PC-9 (cell line): ENCODE measurements at regions of chr9 and their contacts with region 1.

Region 1: DNA sequence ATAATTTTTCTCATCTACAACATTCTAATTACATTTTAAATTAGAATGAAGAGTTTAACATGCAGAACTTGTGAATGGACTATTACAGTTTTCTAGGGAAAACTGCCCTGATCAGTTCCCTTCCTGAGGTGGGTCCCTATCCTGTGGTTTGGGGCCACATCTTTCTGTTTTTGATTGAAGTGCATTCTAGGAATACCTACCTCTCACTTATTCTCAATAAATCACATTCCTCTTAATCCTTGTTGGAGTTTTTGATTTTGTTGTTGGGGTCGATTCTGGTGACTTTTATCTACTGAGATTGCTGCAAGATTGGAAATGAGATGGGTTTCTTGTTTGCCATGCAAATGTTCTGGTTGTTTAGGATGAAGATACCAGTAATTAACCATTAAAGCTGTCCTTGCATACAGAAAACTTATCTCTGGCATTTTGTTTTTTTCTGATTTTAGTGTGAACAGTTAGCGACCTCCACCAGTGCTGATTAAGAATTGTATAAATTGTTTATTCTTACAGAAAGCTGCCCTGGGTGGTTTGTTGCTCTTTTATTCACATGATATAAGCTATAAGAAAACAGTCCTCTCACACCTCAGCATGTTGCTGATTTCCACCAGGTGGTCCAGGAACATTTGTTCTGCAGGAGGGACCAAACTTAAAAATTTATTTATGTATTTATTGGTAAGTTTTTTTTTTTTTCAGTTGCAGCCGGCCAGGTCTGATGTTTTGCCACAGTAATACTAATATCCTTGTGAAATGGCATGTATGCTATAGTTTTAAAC is 269.9 kb downstream of the FANCC start:
- DNase-seq: no peak
- H3K4me3 ChIP-seq: peak overlapping the region; percentile 75; the same call in 1 of the 2 replicates
- H3K27ac ChIP-seq: peak overlapping the region; percentile 84
- H3K4me1 ChIP-seq: peaks cover 45% of the 10 kb centered on the region
- H3K27me3 ChIP-seq: no peaks in the 10 kb centered on the region
- CTCF ChIP-seq: no peak

Region 2: GRCh38 chr9:94794476-94795167 is 253.0 kb before region 1 on chr9:
- CTCF ChIA-PET with region 1: no interaction called
- POLR2A ChIA-PET with region 1: interaction called, 18 read pairs
- intact Hi-C with region 1: no loop called
- DNase-seq: no peak
- H3K4me3 ChIP-seq: no peak overlapping the region
- H3K27ac ChIP-seq: no peak overlapping the region
- H3K4me1 ChIP-seq: peaks cover 20% of the 10 kb centered on the region
- H3K27me3 ChIP-seq: no peaks in the 10 kb centered on the region
- CTCF ChIP-seq: no peak

Region 3: DNA sequence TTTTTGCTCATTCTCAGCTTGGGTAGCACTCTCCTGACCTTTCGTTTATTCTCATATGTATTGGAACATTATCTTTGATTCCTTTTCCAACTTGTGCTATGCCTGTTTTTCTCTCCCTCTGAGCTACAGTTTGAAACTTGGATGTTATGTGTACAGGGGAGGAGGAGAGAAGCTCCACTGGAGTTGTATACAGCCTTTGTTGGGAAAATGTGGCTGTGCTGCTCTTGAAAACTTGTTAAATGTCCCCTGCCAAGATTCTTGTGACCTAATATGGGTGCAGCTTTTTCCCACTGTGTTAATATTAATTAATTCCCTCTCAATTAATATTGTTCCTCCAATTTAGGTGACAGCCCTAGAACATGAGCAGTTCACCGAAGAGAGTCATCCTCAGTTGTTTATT is 85.8 kb before region 1 on chr9:
- CTCF ChIA-PET with region 1: no interaction called
- POLR2A ChIA-PET with region 1: interaction called, 24 read pairs
- intact Hi-C with region 1: no loop called
- DNase-seq: no peak
- H3K4me3 ChIP-seq: no peak overlapping the region
- H3K27ac ChIP-seq: no peak overlapping the region
- H3K4me1 ChIP-seq: no peaks in the 10 kb centered on the region
- H3K27me3 ChIP-seq: no peaks in the 10 kb centered on the region
- CTCF ChIP-seq: no peak